Naive thymus-derived CD8-positive, alpha-beta T cell (primary cell): ENCODE measurements at regions of chr16 and their contacts with region 1.

Region 1: GRCh38 chr16:30065143-30065850 is at the start of gene ALDOA:
- DNase-seq: peak; percentile 89 to 96 (median 92)
- ATAC-seq: peak; percentile 81 to 87
- H3K4me3 Mint-ChIP-seq: peak within 1 kb of the TSS; percentile 98 to 100 (median 99)
- H3K27ac Mint-ChIP-seq: peak within 1 kb of the TSS; percentile 94 to 99 (median 97)
- H3K4me1 Mint-ChIP-seq: peaks cover 17 to 46% (median 43%) of the 10 kb centered on the region in 4 donors
- H3K27me3 Mint-ChIP-seq: no peaks in the 10 kb centered on the region
- polyA plus RNA-seq, gene ALDOA: 798 to 1,176 (median 994) TPM

Region 2: GRCh38 chr16:30025156-30025555 is 40.1 kb before region 1 on chr16:
- POLR2A ChIA-PET with region 1: no interaction called
- DNase-seq: no peak
- ATAC-seq: no peak
- H3K4me3 Mint-ChIP-seq: no peak overlapping the region
- H3K27ac Mint-ChIP-seq: no peak overlapping the region
- H3K4me1 Mint-ChIP-seq: peaks cover 10 to 23% (median 12%) of the 10 kb centered on the region in 4 donors
- H3K27me3 Mint-ChIP-seq: peaks cover 14 to 40% (median 28%) of the 10 kb centered on the region in 5 donors

Region 3: DNA sequence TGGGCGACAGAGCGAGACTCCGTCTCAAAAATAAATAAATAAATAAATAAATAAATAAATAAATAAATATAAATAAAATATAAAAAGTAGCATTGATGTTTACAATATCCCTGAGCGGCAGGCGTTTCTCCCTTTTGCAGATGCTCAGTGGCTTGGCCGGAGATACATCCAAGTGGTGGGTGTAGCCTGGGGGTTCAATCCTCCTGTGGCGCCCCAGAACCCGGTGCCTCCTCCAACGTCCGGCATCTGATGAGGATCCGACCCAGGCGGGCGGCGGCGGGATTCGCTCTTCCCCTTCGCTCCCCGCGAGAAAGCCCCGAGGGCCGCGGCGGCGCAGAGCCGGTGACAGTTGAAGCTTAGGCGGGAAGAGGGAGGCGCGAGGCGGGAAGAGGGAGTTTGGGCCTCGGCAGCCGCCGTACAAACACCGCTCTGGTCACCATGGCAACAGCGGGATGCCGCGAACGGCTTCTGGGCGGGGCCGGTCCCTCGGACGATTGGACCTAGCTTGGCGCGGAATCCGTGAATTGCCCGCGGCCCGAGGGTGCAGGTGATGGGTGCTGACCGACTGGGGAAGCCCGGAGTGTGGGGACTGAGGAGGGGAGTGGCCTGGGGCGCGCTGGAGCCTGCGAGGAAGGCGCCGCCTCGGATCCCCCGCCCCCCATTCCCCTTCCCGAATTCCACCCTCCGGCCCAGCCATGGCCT is 12.5 kb before region 1 on chr16:
- POLR2A ChIA-PET with region 1: interaction called, 21 read pairs
- DNase-seq: peak; percentile 71 to 93 (median 84)
- ATAC-seq: peak; percentile 81 to 83
- H3K4me3 Mint-ChIP-seq: peak overlapping the region; percentile 84 to 91 (median 86)
- H3K27ac Mint-ChIP-seq: peak overlapping the region in 7 of 10 donors; percentile 29 to 90 (median 59)
- H3K4me1 Mint-ChIP-seq: peaks cover 9 to 21% (median 19%) of the 10 kb centered on the region in 4 donors
- H3K27me3 Mint-ChIP-seq: peaks cover 0 to 3% (median 0%) of the 10 kb centered on the region in 5 donors

Region 4: GRCh38 chr16:30075507-30076275 is 10.4 kb after region 1 on chr16 and contains the start of gene PPP4C:
- POLR2A ChIA-PET with region 1: interaction called, 110 read pairs
- DNase-seq: peak; percentile 83 to 93 (median 89)
- ATAC-seq: peak; percentile 86 to 96
- H3K4me3 Mint-ChIP-seq: peak within 1 kb of the TSS; percentile 90 to 98 (median 96)
- H3K27ac Mint-ChIP-seq: peak within 1 kb of the TSS; percentile 94 to 98 (median 97)
- H3K4me1 Mint-ChIP-seq: peaks cover 18 to 54% (median 39%) of the 10 kb centered on the region in 4 donors
- H3K27me3 Mint-ChIP-seq: no peaks in the 10 kb centered on the region
- polyA plus RNA-seq, gene PPP4C: 153 to 199 (median 161) TPM

Region 5: DNA sequence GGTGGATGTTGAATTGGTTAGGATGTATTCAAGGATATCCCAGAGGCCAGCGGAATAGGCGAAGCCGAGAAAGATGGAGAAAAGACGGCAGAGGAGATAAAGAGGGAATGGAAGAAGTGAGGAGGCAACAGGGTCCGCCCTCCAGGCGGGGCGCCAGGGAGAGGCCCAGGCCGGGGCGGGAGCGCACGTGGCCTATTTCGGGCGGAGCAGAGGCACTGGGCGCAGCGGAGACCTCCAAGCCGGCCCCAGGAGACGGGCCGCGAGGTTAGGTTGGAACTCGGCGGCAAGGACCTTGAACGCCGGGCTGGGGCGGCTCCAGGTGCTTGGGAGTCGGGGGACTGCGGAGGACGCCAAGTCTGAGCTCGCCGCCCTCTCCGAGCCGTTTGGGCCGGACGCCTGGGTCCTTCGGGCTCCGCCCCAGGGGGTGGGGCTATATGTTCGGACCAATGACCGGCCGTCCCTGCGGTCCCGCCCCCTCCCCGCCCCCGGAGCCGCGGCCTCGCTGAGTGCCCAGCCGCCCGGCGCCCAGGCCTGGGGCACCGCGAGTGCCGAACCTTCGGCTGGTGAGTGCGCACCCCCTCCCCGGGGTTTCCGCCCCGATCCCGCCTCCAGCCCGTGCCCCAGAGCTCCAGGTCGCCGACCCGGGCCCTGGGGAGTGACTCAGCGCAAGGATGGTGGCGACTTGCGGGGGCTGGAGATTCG is 342.0 kb after region 1 on chr16 and contains the start of gene ZNF771:
- POLR2A ChIA-PET with region 1: interaction called, 23 read pairs
- DNase-seq: peak; percentile 65 to 92 (median 80)
- ATAC-seq: peak; percentile 81 to 87
- H3K4me3 Mint-ChIP-seq: peak within 1 kb of the TSS; percentile 88 to 100 (median 97)
- H3K27ac Mint-ChIP-seq: peak within 1 kb of the TSS; percentile 82 to 96 (median 95)
- H3K4me1 Mint-ChIP-seq: peaks cover 18 to 36% (median 29%) of the 10 kb centered on the region in 4 donors
- H3K27me3 Mint-ChIP-seq: peaks cover 0 to 3% (median 0%) of the 10 kb centered on the region in 5 donors
- polyA plus RNA-seq, gene ZNF771: 2.1 to 6.7 (median 3.8) TPM